ENCODE measurements at regions of chr3 and their contacts with region 1.

Region 1: DNA sequence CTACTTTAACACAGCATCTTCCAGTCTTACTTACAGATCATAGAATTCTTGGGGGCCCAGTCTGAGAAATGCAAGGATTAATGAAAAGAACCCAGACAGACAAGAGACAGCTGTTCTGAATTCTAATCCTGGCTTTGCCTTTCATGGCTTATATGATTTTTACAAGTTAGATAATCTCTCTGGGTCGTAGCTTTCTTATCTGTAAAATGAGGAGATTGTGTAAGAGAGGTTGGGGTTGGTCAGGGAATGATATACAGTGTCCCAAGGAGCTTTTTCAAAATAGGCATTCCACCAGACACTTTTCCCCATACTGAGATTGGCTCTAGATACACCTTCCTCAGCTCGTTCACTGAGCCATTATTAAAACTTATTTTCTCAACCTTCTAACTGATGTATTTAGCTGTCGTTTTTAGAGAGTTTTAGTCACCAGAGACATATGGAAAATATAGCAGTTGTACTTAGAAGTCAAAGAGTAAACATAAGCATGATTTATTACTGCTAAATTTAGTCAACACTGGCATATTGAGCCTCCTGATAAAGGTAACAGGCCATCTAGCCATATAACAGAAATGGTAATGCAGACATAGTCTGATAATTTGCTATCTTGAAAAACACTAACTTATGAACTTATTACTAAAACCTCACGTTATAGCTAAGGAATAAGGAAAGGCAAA is 163.0 kb upstream of the MLF1 start:
- DNase-seq: no peak

Region 2: GRCh38 chr3:159884661-159885402 is 1476.9 kb after region 1 on chr3:
- intact Hi-C with region 1: loop called in 1 of 2 experiments (anchors 10 kb)
- DNase-seq: no peak